Activated CD8-positive, alpha-beta T cell treated with anti-CD3 and anti-CD28 coated beads for 36 hours (primary cell): ENCODE measurements at regions of chr11 and their contacts with region 1.

Region 1: DNA sequence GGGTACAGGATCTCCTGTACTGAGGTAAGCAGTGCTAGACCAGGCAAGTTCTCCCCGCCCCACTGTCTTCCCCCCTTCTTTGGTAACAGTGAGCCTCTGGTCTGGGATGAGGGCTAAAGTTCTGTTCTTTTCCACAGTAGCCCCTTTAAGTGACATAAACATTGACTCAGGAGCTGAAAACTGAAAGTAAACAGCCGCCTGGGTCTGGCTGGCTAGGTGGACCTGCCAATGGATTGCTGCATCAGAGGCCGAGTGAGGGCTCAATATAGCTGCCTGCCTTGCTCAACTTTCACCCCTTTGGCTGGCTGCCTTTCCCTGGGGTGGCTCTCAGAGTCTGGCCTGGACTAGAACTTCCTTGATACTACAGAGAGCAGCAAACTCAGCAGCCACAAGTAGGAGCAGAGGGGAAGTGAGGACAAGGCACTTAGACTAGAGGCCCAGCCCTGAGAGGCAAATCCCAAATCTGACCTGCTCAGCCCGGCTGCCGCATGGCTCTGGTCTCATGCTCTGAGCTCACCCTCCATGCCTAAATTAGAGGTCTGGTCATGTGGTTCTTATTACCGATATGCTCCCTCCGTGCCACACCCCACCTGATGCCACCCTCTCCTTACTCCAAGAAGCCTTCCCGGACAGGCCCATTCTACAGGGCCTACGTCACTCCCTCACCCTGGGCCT is 9.6 kb upstream of the UCP3 start:
- DNase-seq: no peak
- ATAC-seq: no peak
- H3K4me3 Mint-ChIP-seq: no peak overlapping the region
- H3K27ac Mint-ChIP-seq: no peak overlapping the region
- H3K4me1 Mint-ChIP-seq: peaks cover 34% of the 10 kb centered on the region
- H3K27me3 Mint-ChIP-seq: no peaks in the 10 kb centered on the region
- CTCF ChIP-seq: no peak

Region 2: DNA sequence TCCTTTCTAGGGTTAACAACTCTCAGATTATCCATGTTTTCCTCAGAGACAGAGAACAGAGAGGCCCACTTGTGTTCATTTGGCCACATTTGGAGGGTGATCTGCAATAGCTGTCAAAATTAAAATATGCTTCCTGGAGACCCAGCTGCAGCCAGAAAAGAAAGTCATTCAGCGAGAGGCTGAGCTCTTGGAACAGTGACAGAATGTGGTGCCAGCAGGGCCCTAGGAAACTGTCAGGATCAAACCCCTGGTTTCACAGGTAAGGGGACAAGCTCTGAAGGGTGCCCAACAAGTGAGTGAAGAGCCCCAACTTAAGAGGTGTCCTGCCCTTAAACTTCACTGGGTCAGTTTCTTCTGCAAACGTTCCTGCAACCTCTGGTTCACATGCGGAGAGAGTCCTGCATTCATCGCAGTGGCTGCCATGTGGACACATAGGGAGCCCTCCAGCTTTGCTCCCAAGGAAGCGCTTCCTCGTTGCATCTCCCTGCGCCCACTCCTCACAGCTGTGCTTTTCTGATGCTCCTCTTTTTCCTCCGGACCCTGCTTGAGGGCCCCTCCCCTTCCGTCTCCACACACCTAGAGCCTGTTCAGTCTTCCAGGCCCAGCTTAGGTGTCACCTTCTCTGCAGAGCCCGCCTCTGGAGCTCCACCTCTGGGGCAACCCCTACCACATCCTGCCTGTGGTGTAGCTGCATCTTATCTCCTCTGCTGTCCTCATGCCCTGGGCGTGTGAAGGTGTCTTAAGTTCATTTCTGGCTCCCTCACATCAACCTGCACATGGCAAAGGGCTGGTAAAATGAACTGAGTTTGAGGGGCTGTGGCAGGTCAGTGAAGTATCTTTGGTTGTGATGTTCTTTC is 13.5 kb before region 1 on chr11:
- CTCF ChIA-PET with region 1: interaction called, 3 read pairs
- POLR2A ChIA-PET with region 1: interaction called, 18 read pairs
- intact Hi-C with region 1: loop called (anchors 1 kb)
- DNase-seq: peak; percentile 96
- ATAC-seq: peak; percentile 99
- H3K4me3 Mint-ChIP-seq: peak overlapping the region; percentile 65
- H3K27ac Mint-ChIP-seq: peak overlapping the region; percentile 91
- H3K4me1 Mint-ChIP-seq: peaks cover 82% of the 10 kb centered on the region
- H3K27me3 Mint-ChIP-seq: no peaks in the 10 kb centered on the region
- CTCF ChIP-seq: no peak

Region 3: GRCh38 chr11:74030723-74031676 is 12.5 kb after region 1 on chr11:
- CTCF ChIA-PET with region 1: interaction called, 3 read pairs
- POLR2A ChIA-PET with region 1: interaction called, 12 read pairs
- intact Hi-C with region 1: no loop called
- DNase-seq: no peak
- ATAC-seq: peak; percentile 67
- H3K4me3 Mint-ChIP-seq: peak overlapping the region; percentile 51
- H3K27ac Mint-ChIP-seq: peak overlapping the region; percentile 86
- H3K4me1 Mint-ChIP-seq: peaks cover 33% of the 10 kb centered on the region
- H3K27me3 Mint-ChIP-seq: no peaks in the 10 kb centered on the region
- CTCF ChIP-seq: no peak

Region 4: GRCh38 chr11:74248469-74248868 is 230.0 kb after region 1 on chr11:
- CTCF ChIA-PET with region 1: no interaction called
- POLR2A ChIA-PET with region 1: no interaction called
- intact Hi-C with region 1: no loop called
- DNase-seq: no peak
- ATAC-seq: no peak
- H3K4me3 Mint-ChIP-seq: no peak overlapping the region
- H3K27ac Mint-ChIP-seq: no peak overlapping the region
- H3K4me1 Mint-ChIP-seq: no peaks in the 10 kb centered on the region
- H3K27me3 Mint-ChIP-seq: no peaks in the 10 kb centered on the region
- CTCF ChIP-seq: no peak